ENCODE measurements at regions of chr2 and their contacts with region 1.

Region 1: DNA sequence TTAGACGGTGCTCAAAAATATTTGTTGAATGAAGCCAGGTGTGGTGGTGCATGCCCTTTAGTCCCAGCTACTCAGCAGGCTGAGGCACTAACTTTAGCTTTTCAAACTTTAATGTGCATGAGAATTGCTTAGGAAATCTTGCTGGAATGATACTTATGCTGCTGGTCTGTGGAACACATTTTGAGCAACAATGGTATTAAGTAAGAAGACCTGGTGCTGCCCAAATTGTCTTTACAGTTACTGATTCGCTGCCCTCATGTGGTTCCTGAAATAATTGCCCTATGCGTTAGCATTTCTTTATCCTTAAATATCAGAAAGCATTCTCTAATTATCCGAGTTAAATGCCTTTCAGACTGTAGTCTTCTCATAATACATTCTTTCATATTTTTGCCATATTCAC is 76.0 kb upstream of the SESTD1 start:
- DNase-seq: peak; percentile 55
- H3K4me3 ChIP-seq: no peak overlapping the region
- H3K27ac ChIP-seq: no peak overlapping the region
- H3K4me1 ChIP-seq: peaks cover 17% of the 10 kb centered on the region
- H3K27me3 ChIP-seq: no peaks in the 10 kb centered on the region
- CTCF ChIP-seq: peak; percentile 57

Region 2: DNA sequence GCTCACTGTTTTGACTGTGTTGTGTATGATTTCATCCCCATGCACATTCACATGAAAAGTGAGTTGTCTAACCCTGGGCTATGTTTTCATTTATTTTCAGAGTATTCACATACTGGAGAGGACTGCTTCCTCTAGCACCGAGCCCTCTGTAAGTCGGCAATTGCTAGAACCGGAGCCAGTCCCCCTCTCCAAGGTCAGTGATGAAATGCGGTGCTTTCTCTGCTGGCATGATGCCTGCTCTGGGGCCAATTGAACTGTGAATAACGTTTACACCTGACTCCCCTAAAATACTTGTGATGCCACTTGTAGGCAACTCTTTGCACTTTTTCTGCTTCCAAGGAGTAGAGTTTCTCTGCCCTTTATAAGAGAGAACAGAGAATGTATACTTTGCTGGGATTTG is 1016.6 kb before region 1 on chr2:
- CTCF ChIA-PET with region 1: no interaction called
- POLR2A ChIA-PET with region 1: no interaction called
- intact Hi-C with region 1: no loop called
- DNase-seq: no peak
- H3K4me3 ChIP-seq: no peak overlapping the region
- H3K27ac ChIP-seq: no peak overlapping the region
- H3K4me1 ChIP-seq: no peaks in the 10 kb centered on the region
- H3K27me3 ChIP-seq: no peaks in the 10 kb centered on the region
- CTCF ChIP-seq: no peak

Region 3: GRCh38 chr2:179044500-179044899 is 296.2 kb before region 1 on chr2:
- CTCF ChIA-PET with region 1: no interaction called
- POLR2A ChIA-PET with region 1: no interaction called
- intact Hi-C with region 1: no loop called
- DNase-seq: no peak
- H3K4me3 ChIP-seq: no peak overlapping the region
- H3K27ac ChIP-seq: no peak overlapping the region
- H3K4me1 ChIP-seq: no peaks in the 10 kb centered on the region
- H3K27me3 ChIP-seq: peaks cover 4% of the 10 kb centered on the region
- CTCF ChIP-seq: no peak

Region 4: DNA sequence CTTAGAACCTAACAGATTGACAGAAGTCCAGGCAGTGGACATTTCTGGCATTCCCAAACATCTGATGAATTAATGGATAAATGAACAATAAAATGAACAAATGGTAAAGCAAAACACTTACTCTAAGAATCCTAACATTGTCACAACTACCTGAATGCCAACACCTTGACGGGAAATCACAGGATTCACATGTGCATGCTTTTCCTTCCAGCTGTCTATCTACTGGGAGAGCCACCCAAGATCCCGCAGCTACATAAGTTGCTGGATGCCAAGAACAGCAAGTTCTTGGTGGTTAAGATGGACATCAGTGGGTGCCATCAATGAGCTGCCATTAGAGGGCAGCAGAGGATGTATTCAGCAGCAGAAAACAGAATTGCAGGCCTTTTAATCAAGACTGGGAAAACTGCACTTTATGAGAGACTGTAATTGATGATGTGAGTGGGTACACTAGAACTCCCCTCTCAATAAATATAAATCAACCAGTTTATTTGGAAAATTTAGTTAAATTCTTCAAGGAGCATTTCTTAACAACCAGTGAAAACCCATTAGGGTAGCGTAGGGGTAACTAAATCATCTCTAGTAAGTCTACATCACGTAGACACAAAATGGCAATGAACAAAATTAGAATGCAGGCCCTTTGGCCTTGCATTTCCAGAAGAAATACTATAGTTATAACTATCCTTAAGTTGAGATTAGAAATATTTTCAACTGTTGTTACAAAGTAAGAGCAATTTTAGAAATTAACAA is 121.6 kb before region 1 on chr2:
- CTCF ChIA-PET with region 1: no interaction called
- POLR2A ChIA-PET with region 1: no interaction called
- intact Hi-C with region 1: loop called (anchors 2 kb)
- DNase-seq: peak; percentile 80
- H3K4me3 ChIP-seq: no peak overlapping the region
- H3K27ac ChIP-seq: no peak overlapping the region
- H3K4me1 ChIP-seq: no peaks in the 10 kb centered on the region
- H3K27me3 ChIP-seq: no peaks in the 10 kb centered on the region
- CTCF ChIP-seq: peak; percentile 90

Region 5: DNA sequence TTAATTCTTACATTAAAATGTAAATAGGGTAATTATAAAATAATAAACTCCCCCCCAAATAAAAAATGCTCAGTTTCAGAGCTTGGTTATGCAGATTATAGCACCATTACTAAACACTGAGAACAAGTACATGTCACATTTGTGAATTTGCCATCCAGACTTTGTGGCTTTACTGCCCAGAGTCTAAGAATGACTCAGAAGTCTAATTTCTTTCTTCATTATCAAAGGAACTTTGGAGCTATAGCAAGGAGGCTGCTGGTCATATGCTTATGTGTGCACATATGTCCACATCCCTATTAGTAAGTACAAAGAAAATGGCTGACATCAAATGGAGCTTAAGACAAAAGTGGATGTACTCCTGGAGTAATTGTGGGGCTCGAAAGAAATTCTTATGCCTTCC is 172.5 kb after region 1 on chr2:
- CTCF ChIA-PET with region 1: no interaction called
- POLR2A ChIA-PET with region 1: no interaction called
- intact Hi-C with region 1: no loop called
- DNase-seq: no peak
- H3K4me3 ChIP-seq: no peak overlapping the region
- H3K27ac ChIP-seq: no peak overlapping the region
- H3K4me1 ChIP-seq: no peaks in the 10 kb centered on the region
- H3K27me3 ChIP-seq: no peaks in the 10 kb centered on the region
- CTCF ChIP-seq: no peak

Region 6: DNA sequence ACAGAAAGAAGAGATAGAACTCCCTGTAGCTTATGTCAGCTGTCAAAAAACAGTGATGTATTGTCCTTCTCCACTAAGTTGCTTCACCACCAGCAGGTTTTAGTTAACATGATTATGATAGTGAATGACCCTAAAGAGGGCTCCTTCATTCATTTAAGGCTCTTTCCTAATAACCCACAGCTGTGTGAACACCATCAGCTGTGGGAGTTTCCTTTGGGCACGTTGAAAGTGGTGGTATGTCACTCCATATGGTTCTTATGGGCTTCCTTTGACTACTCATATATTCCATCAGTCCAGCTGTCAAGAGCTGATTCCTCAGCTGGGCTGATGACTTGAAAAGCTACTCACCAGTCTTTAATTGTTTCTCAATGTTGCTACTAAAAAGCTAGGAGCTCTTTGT is 1850.0 kb after region 1 on chr2:
- CTCF ChIA-PET with region 1: no interaction called
- POLR2A ChIA-PET with region 1: interaction called, 13 read pairs
- intact Hi-C with region 1: no loop called
- DNase-seq: peak; percentile 61
- H3K4me3 ChIP-seq: no peak overlapping the region
- H3K27ac ChIP-seq: no peak overlapping the region
- H3K4me1 ChIP-seq: no peaks in the 10 kb centered on the region
- H3K27me3 ChIP-seq: no peaks in the 10 kb centered on the region
- CTCF ChIP-seq: no peak